Naive thymus-derived CD8-positive, alpha-beta T cell (primary cell): ENCODE measurements at regions of chr6 and their contacts with region 1.

Region 1: DNA sequence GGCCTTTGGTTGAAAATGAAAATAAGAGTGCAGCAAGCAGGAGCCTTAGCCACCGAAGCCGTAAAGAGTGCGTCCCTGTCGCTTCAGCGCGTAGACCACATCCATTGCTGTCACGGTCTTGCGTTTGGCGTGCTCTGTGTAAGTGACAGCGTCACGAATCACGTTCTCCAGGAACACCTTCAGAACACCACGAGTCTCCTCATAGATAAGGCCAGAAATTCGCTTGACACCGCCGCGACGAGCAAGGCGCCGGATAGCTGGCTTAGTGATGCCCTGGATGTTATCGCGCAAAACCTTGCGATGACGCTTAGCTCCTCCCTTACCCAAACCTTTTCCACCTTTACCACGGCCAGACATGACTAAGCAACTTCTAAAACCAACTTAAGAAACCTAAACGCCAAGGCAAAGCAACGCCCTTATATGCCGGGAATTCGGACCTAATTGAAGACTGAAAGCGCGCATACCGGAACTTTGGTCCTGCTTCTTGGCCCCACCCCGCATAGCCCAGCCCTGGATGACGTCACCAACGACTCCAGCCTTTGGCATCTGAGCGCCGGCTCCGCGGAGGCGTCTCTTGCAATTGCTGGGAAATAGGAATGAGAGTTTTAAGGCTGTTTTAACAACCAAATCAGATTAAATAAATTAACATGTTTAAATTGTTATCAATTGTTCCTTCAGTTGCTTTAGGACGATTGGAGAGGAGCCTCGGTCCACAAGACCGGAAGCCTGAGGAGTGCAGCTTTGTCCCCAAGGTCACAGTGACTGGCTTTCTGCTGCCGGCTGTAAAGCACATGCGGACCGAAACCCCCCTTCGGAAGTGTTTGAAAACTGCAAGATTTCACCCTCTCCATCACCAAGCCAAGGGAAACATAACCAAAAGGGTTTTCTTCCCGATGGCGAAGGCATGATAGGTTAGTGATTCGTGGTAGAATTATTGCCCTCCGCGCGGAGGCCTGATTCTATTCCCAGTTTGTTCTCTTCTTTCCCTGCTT is 79.6 kb upstream of the BTN3A2 start:
- DNase-seq: peak; percentile 80 to 99 (median 93)
- ATAC-seq: peak; percentile 77 to 87
- H3K4me3 Mint-ChIP-seq: peak overlapping the region; percentile 84 to 96 (median 91)
- H3K27ac Mint-ChIP-seq: peak overlapping the region; percentile 95 to 100 (median 98)
- H3K4me1 Mint-ChIP-seq: peaks cover 19 to 36% (median 29%) of the 10 kb centered on the region in 4 donors
- H3K27me3 Mint-ChIP-seq: peaks cover 0 to 7% (median 0%) of the 10 kb centered on the region in 5 donors

Region 2: DNA sequence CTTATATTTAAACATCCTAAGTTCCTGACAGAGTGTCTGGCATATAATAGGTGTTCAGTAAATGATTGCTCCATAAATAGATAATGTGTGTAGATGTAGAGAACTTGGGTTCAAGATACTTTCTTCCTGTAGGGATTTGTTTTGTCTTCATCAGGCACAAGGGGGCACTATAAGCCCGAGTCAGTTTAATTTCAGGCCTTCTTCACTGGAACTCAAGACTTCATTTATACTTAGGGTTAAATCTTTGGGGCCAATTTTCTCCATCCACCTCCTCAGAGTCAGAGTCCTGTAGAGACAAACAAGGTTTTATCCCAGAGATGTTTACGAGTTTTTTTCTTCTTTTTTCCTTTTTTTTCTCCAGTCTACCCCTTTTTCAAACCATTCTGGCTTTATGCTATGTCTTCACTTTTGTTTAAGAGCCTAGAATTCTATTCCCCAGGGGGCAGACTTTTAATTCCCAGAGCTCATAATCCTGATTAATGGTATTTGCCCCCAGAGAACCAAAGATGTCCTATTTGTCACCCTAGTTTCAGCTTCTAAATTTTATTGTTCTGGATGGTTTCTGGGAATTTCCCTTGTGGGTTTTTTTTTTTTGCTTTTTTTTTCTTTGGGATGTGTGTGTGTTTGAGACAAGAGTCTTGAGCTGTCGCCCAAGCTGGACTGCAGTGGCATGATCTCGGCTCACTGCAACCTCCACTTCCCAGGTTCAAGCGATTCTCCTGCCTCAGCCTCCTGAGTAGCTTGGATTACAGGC is 109.8 kb before region 1 on chr6:
- POLR2A ChIA-PET with region 1: interaction called, 19 read pairs
- DNase-seq: peak in 9 of 10 donors; percentile 21 to 76 (median 59)
- ATAC-seq: no peak
- H3K4me3 Mint-ChIP-seq: peak overlapping the region in 5 of 10 donors; percentile 33 to 62 (median 51)
- H3K27ac Mint-ChIP-seq: peak overlapping the region; percentile 11 to 82 (median 59)
- H3K4me1 Mint-ChIP-seq: peaks cover 15 to 43% (median 34%) of the 10 kb centered on the region in 4 donors
- H3K27me3 Mint-ChIP-seq: no peaks in the 10 kb centered on the region

Region 3: DNA sequence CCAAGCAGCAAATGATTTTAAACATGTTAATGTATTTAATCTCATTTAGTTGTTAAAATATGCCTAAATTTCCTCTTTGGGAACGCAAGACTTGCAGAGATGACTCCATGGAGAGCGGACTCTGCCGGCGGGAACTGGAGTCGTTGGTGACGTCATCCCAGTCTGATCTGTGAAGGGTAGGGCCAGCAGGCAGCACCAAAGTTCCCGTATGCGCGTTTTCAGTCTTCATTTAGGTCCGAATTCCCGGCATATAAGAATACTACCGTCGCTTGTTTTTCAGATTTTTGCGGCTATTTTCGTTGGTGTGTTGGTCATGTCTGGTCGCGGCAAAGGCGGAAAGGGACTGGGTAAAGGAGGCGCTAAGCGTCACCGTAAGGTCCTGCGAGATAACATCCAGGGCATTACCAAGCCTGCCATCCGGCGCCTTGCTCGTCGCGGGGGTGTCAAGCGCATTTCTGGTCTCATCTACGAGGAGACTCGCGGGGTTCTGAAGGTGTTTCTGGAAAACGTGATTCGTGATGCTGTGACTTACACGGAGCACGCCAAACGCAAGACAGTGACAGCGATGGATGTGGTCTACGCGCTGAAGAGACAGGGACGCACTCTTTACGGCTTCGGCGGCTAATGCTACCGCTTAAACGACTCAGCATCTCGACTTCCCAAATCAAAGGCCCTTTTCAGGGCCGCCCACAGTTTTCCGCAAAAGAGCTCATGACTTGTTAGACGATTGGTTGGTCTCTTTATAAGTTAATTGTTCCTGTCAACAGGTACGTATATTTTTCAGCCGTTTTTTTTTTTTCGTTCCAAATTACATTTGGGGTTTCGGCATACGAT is 80.9 kb before region 1 on chr6:
- POLR2A ChIA-PET with region 1: interaction called, 107 read pairs
- DNase-seq: peak; percentile 69 to 97 (median 88)
- ATAC-seq: peak; percentile 68 to 71
- H3K4me3 Mint-ChIP-seq: no peak overlapping the region
- H3K27ac Mint-ChIP-seq: no peak overlapping the region
- H3K4me1 Mint-ChIP-seq: peaks cover 14 to 36% (median 26%) of the 10 kb centered on the region in 4 donors
- H3K27me3 Mint-ChIP-seq: peaks cover 0 to 4% (median 0%) of the 10 kb centered on the region in 5 donors

Region 4: GRCh38 chr6:26223650-26224546 is 61.5 kb before region 1 on chr6:
- POLR2A ChIA-PET with region 1: interaction called, 23 read pairs
- DNase-seq: peak; percentile 54 to 85 (median 71)
- ATAC-seq: peak; percentile 89 to 90
- H3K4me3 Mint-ChIP-seq: no peak overlapping the region
- H3K27ac Mint-ChIP-seq: no peak overlapping the region
- H3K4me1 Mint-ChIP-seq: peaks cover 4 to 25% (median 14%) of the 10 kb centered on the region in 4 donors
- H3K27me3 Mint-ChIP-seq: no peaks in the 10 kb centered on the region

Region 5: DNA sequence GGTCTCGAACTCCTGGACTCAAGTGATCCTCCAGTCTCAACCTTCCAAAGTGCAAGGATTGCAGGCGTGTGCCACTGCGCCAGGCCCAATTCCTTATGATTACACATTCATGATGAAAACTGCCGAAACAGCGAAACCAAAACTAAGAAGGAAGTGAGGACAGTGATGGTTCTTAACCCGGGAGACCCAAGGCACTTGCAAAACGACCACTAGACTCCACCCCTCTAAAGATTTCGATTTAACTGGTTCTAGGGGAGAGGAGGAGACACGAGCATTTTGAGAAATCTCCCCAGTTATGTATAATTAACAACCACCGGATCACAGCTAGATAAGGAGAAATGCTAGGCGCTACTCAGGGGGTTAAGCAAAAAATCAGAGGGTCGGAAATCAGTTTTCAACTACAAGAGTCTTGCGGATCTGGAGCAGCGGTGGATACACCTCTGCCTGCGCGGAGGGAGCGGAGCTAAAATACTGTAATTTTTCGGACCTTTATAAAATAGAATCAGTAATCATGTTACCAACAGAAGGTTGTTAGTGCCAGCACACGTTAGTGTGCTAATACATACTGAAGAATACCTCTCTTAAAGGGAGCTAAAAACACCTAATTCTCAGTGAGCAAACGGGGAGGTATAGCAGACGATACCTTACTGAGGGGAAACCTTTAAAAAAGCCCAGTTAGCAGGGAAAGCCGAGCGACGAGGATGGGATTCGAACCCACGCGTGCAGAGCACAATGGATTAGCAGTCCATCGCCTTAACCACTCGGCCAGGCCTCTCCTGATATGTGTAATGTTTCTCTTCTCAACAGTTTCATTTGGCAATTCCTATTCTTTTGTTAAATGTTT is 19.6 kb after region 1 on chr6:
- POLR2A ChIA-PET with region 1: interaction called, 11 read pairs
- DNase-seq: peak in 9 of 10 donors; percentile 53 to 82 (median 68)
- ATAC-seq: peak; percentile 80 to 82
- H3K4me3 Mint-ChIP-seq: peak overlapping the region; percentile 85 to 99 (median 92)
- H3K27ac Mint-ChIP-seq: peak overlapping the region; percentile 86 to 96 (median 94)
- H3K4me1 Mint-ChIP-seq: peaks cover 21 to 42% (median 33%) of the 10 kb centered on the region in 4 donors
- H3K27me3 Mint-ChIP-seq: no peaks in the 10 kb centered on the region

Region 6: GRCh38 chr6:26322645-26323482 is 37.4 kb after region 1 on chr6:
- POLR2A ChIA-PET with region 1: interaction called, 14 read pairs
- DNase-seq: peak in 9 of 10 donors; percentile 33 to 84 (median 78)
- ATAC-seq: peak; percentile 60 to 72
- H3K4me3 Mint-ChIP-seq: peak overlapping the region; percentile 80 to 91 (median 88)
- H3K27ac Mint-ChIP-seq: peak overlapping the region; percentile 49 to 93 (median 88)
- H3K4me1 Mint-ChIP-seq: peaks cover 17 to 35% (median 26%) of the 10 kb centered on the region in 4 donors
- H3K27me3 Mint-ChIP-seq: peaks cover 2 to 25% (median 9%) of the 10 kb centered on the region in 5 donors

Region 7: DNA sequence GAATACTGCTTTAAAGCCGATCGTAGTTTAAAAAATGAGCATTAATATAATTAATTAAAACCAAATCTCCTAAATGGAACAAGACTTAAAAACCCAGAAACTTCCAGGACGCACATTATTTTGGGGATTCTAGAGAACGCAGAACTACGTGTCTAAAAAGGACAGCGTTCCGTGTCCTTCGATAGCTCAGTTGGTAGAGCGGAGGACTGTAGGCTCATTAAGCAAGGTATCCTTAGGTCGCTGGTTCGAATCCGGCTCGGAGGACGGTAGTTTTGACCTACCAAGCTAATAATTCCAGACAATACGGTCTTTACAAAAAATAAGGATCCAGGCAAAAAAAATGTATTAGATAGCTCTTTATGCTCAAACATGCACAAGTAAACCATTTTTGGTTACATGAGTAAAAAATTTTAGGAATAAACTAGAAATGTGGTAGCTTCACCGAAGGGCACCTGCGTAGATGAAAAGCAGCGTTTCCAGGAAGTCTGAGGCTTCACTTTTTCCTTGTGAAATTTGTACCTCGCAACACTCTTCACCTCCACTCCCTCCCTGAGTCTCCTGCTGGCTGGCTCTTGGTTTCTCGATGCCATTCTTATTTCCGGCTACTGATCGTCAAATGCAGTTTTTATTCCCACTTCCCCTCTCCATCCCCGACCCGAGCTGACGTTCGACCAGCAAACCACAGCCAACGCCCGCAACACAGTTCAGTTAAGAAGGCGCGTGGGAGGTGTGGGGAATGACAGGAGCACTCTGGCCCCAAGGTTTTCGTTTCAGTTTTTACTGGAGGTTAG is 291.7 kb after region 1 on chr6:
- POLR2A ChIA-PET with region 1: no interaction called
- DNase-seq: peak in 6 of 10 donors; percentile 28 to 64 (median 49)
- ATAC-seq: peak; percentile 45 to 67
- H3K4me3 Mint-ChIP-seq: peak overlapping the region; percentile 61 to 88 (median 78)
- H3K27ac Mint-ChIP-seq: peak overlapping the region; percentile 11 to 98 (median 73)
- H3K4me1 Mint-ChIP-seq: peaks cover 3 to 25% (median 22%) of the 10 kb centered on the region in 4 donors
- H3K27me3 Mint-ChIP-seq: peaks cover 0 to 15% (median 0%) of the 10 kb centered on the region in 5 donors